Activated CD8-positive, alpha-beta T cell treated with anti-CD3 and anti-CD28 coated beads for 36 hours (primary cell): ENCODE measurements at regions of chr17 and their contacts with region 1.

Region 1: DNA sequence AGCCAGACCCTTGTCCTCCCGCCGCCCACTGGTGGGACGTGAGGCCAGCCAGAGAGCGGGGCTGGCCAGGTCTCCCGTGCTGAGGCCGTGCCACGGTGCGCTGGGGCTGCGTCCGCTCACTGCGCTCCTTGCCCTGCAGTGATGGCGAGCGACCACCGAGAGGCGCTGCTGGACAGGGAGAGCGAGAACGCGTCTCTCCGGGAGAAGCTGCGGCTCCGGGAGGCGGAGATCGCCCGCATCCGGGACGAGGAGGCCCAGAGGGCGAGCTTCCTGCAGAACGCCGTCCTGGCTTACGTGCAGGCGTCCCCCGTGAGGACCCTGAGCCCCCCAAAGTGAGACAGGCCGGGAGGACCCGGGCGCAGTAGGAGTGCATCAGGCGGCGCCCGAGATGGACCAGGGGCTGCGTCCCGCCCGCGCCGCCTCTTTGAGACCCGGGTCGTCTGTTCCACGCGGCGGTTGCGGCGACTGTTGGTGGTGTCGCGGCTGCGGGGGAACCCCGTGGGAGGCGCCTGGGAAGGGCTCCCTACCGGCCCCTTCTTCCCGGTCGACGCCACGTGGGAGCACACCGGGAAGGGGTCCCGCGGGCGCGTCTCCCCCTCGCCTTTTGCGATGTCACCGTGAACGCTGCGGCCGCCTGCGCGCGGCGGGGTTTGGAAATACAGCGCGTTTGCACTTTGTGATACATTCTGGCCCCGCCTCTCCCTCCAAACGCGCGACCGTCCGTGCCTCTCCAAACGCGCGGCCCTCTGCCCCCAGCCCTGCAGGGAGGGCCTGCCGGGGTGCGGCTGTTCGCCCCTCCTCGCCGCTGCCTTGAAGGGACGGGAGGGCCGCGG is 792 bp upstream of the RAC3 start:
- DNase-seq: peak; percentile 85
- ATAC-seq: peak; percentile 87
- H3K4me3 Mint-ChIP-seq: peak overlapping the region; percentile 73
- H3K27ac Mint-ChIP-seq: no peak overlapping the region
- H3K4me1 Mint-ChIP-seq: peaks cover 7% of the 10 kb centered on the region
- H3K27me3 Mint-ChIP-seq: no peaks in the 10 kb centered on the region
- CTCF ChIP-seq: peak; percentile 100

Region 2: DNA sequence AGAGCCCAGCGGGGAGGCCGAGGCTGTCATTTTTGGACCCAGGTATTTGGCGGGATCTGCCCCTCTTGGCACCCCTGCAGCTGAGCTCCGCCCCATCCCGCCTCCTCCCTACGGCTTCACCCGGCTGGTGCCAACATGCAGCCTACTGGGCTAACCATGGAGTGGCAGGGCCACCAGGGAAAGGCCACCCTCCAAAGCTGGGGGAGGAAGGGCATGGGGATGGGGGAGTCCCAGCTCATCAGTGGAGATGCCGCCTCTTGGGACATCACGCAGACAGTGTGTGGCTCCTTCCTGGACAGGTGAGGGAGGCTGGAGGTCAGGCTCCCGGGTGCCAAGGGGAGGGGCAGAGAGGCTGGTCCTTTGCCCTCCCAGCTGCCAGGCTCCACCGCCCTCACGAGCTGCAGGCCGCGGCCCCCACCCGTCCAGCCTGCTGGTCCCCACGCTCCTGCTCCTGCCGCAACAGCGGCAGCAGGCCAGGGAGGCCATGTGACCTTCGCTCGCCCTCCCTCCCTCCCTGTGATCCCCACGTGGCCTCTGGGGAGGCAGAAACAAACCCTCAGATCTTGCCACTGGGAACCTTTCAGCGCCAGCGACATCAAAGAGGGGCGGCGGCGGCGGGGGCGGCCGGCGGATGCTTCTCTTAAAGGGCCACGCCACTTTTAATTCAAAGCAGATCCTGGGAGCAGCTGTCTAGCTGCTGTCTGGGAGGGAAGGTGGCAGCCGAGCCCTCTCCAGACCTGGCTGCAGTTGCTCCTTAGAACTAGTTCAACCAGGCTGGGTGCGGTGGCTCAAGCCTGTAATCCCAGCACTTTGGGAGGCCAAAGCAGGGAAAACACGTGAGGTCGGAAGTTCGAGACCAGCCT is 62.9 kb before region 1 on chr17:
- CTCF ChIA-PET with region 1: interaction called, 10 read pairs
- POLR2A ChIA-PET with region 1: no interaction called
- intact Hi-C with region 1: no loop called
- DNase-seq: peak; percentile 97
- ATAC-seq: peak; percentile 93
- H3K4me3 Mint-ChIP-seq: peak overlapping the region; percentile 56
- H3K27ac Mint-ChIP-seq: peak overlapping the region; percentile 80
- H3K4me1 Mint-ChIP-seq: peaks cover 17% of the 10 kb centered on the region
- H3K27me3 Mint-ChIP-seq: peaks cover under 1% of the 10 kb centered on the region
- CTCF ChIP-seq: no peak

Region 3: DNA sequence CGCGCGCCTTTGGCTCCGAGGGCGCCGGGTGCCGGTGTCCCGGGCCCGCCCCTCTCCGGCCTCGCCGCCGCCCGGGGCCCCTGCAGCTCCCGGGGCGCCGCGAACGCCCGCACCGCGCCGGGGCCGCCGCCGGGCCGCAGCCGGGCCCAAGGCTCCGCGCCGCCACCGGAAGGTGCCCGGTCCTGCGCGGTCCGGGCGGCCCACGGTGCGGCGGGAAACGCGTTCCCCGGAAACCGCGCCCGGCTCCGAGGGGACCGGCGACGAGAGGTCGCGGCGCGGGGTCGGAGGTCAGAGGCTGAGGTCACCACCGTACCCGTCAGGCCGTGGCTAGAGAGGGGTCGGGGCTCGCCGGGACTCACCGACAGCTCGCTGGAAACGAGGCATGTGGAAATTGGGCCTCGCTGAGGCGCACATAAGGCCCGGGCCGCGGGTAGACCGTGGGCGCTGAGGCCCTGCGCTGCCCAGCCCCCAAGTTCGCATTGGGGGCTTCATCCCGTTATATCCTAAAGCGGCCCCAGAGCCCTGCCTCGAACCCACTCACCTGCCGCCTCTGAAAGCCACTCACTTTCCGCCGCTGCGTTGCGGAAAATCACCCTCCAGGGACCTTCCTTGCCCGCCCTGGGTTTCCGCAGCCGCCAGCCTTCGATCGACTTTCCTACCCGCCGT is 35.1 kb after region 1 on chr17 and contains the start of gene DUS1L:
- CTCF ChIA-PET with region 1: interaction called, 16 read pairs
- POLR2A ChIA-PET with region 1: interaction called, 6 read pairs
- intact Hi-C with region 1: no loop called
- DNase-seq: peak; percentile 67
- ATAC-seq: peak; percentile 93
- H3K4me3 Mint-ChIP-seq: peak within 1 kb of the TSS; percentile 85
- H3K27ac Mint-ChIP-seq: peak within 1 kb of the TSS; percentile 88
- H3K4me1 Mint-ChIP-seq: peaks cover 14% of the 10 kb centered on the region
- H3K27me3 Mint-ChIP-seq: no peaks in the 10 kb centered on the region
- CTCF ChIP-seq: no peak
- total RNA-seq, gene DUS1L: 139 to 140 TPM

Region 4: DNA sequence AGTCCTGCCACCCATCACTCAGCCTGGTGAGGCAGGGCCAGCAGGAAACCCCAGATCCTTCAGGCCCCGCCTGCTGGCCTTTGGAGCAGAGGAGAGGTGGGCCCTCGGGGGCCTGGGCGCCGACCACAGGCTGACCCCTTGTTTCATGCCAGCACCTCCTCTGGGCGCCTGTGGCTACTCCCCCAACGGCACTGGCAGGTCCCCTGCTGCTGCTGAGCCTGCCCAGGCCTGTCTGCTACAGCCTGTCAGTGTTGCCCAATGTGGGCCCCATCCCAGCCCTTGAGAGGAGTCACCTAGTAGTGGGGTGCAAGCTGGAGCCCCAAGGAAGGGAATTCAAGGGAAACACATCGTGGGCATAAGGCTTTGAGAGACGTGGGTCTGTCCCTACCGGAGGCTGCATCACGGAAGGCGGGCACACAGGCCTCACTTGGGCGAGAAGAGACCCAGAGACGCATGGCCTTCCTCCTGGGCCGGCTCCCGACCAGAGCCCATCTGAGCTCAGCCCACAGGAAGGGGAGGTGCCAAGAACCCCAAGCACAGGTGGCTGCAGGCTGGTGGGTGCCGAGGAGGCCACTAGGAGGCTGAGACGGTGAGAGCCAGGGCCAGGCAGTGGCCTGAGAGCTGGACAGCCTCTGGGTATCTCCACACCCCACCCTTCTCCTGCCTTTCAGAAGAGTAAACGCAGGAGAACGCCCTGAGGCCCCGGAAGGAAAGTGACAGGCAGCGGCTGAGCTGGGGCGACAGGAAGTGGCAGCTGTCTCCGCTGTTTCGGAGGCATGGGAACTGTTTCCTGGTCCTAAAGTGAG is 75.4 kb after region 1 on chr17:
- CTCF ChIA-PET with region 1: interaction called, 18 read pairs
- POLR2A ChIA-PET with region 1: no interaction called
- intact Hi-C with region 1: no loop called
- DNase-seq: peak; percentile 80
- ATAC-seq: peak; percentile 89
- H3K4me3 Mint-ChIP-seq: peak overlapping the region; percentile 90
- H3K27ac Mint-ChIP-seq: peak overlapping the region; percentile 95
- H3K4me1 Mint-ChIP-seq: peaks cover 27% of the 10 kb centered on the region
- H3K27me3 Mint-ChIP-seq: no peaks in the 10 kb centered on the region
- CTCF ChIP-seq: peak; percentile 50